Naive thymus-derived CD4-positive, alpha-beta T cell (primary cell): ENCODE measurements at regions of chr14 and their contacts with region 1.

Region 1: DNA sequence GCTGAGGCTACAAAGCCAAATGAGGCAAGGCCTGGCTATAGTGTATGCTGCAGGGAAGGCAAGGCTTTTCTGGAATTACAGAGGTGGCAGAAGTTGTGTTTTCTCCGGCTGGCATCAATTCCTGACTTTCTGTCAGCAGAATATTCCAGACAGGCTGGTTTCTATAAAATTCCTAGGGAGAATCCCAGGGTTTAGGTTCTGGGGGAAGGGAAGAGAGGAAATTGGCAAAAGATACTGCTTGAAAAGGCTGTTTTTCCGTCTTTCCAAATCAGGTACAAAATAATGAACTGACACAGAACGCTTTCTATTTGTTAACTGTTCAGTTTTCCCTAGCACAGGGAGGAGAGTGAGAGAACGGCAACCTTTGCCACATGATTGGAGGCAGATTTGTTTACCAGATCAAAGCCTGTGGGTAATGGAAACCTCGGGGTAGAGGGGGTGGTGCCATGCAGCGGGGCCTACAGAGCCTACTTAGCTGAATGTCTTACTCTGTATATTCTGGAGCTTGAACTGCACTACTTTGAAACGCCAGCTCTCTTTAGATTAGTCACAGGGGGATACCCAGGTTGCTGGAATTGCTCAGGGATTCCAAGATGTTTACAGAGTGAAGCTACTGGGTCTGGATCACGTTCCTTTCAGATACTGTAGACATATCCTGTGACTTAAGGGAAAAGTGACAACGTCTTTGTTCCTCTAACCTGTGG is 65.8 kb upstream of the DACT1 start:
- DNase-seq: peak in 8 of 9 donors; percentile 41 to 80 (median 69)
- ATAC-seq: peak; percentile 87
- H3K4me3 ChIP-seq: no peak overlapping the region
- H3K4me3 Mint-ChIP-seq: peak overlapping the region; percentile 35 to 83 (median 70)
- H3K27ac ChIP-seq: peak overlapping the region; percentile 40
- H3K27ac Mint-ChIP-seq: peak overlapping the region; percentile 74 to 96 (median 93)
- H3K4me1 ChIP-seq: peaks cover 0 to 33% of the 10 kb centered on the region in 2 donors
- H3K4me1 Mint-ChIP-seq: peaks cover 14 to 67% (median 51%) of the 10 kb centered on the region in 7 donors
- H3K27me3 ChIP-seq: no peaks in the 10 kb centered on the region
- H3K27me3 Mint-ChIP-seq: no peaks in the 10 kb centered on the region

Region 2: GRCh38 chr14:58549105-58549755 is 22.7 kb before region 1 on chr14:
- CTCF ChIA-PET with region 1: no interaction called
- POLR2A ChIA-PET with region 1: interaction called, 8 read pairs
- intact Hi-C with region 1: loop called in 1 of 2 experiments (anchors 2 kb)
- DNase-seq: no peak
- ATAC-seq: no peak
- H3K4me3 ChIP-seq: no peak overlapping the region
- H3K4me3 Mint-ChIP-seq: no peak overlapping the region
- H3K27ac ChIP-seq: no peak overlapping the region
- H3K27ac Mint-ChIP-seq: no peak overlapping the region
- H3K4me1 ChIP-seq: no peaks in the 10 kb centered on the region
- H3K4me1 Mint-ChIP-seq: peaks cover 0 to 3% (median 0%) of the 10 kb centered on the region in 7 donors
- H3K27me3 ChIP-seq: no peaks in the 10 kb centered on the region
- H3K27me3 Mint-ChIP-seq: no peaks in the 10 kb centered on the region

Region 3: DNA sequence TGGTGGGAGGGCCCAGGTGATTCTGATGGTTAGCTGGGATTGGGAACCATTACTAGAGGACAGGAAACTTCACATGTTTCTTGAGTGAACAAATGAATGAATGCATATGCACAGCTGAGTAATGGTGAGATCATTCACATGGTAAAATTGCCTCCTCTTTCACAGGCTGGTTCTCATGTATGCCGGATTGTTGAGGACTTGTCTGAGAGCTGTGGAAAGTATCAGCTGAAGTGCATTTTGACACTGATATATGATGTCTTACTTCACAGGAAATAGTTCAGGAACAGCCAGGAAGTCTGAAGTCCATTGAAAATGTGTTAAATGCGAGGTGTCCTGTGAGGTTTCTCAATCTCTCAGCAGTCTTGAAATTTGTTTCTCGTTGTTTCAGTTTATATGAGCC is 11.7 kb before region 1 on chr14:
- CTCF ChIA-PET with region 1: interaction called, 4 read pairs
- POLR2A ChIA-PET with region 1: interaction called, 13 read pairs
- intact Hi-C with region 1: no loop called
- DNase-seq: no peak
- ATAC-seq: no peak
- H3K4me3 ChIP-seq: no peak overlapping the region
- H3K4me3 Mint-ChIP-seq: no peak overlapping the region
- H3K27ac ChIP-seq: no peak overlapping the region
- H3K27ac Mint-ChIP-seq: no peak overlapping the region
- H3K4me1 ChIP-seq: peaks cover 0 to 6% of the 10 kb centered on the region in 2 donors
- H3K4me1 Mint-ChIP-seq: peaks cover 0 to 10% (median 4%) of the 10 kb centered on the region in 7 donors
- H3K27me3 ChIP-seq: no peaks in the 10 kb centered on the region
- H3K27me3 Mint-ChIP-seq: no peaks in the 10 kb centered on the region

Region 4: DNA sequence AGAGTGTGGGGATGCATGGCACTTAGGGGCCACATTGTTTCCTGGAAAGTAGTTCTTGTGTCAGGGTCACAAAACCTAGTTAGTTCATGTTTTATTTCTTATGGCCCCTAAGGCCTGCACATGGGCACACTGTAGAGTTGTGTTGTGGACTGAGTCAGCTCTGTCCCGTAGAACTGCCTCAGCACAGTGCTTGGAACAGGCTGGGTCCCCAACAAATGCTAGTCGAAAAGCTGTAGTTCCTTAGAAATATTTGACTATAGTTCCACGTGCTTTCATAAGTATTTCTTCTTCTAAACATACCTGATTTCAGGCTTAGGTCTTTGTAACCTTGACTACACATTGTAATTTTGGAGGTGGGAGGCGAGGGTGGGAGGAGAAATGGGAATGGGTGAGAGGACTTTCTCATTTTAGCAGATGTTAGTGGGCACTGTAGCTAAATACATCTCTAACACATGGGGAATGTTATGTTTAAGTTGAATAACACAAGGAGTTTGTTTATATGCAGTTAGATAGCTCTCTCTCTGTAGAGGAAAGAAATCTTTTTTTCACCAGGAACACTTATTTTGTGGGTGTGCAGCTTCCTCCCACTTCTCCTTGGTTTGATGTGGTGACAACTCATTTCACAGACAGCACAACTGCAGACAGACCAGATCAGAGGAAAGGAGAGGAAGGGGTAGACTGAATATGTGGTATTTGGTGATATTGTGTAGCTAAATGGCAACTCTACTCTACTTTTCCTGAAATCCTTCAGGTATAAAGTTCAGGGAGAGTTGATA is 26.3 kb after region 1 on chr14:
- CTCF ChIA-PET with region 1: interaction called, 7 read pairs
- POLR2A ChIA-PET with region 1: interaction called, 4 read pairs
- intact Hi-C with region 1: loop called (anchors 1 kb)
- DNase-seq: peak in 7 of 9 donors; percentile 54 to 81 (median 74)
- ATAC-seq: peak; percentile 92
- H3K4me3 ChIP-seq: peak overlapping the region; percentile 3
- H3K4me3 Mint-ChIP-seq: peak overlapping the region; percentile 49 to 78 (median 72)
- H3K27ac ChIP-seq: peak overlapping the region; percentile 7
- H3K27ac Mint-ChIP-seq: peak overlapping the region; percentile 42 to 92 (median 72)
- H3K4me1 ChIP-seq: peaks cover 0 to 46% of the 10 kb centered on the region in 2 donors
- H3K4me1 Mint-ChIP-seq: peaks cover 16 to 59% (median 47%) of the 10 kb centered on the region in 7 donors
- H3K27me3 ChIP-seq: no peaks in the 10 kb centered on the region
- H3K27me3 Mint-ChIP-seq: peaks cover 0 to 5% (median 0%) of the 10 kb centered on the region in 5 donors

Region 5: DNA sequence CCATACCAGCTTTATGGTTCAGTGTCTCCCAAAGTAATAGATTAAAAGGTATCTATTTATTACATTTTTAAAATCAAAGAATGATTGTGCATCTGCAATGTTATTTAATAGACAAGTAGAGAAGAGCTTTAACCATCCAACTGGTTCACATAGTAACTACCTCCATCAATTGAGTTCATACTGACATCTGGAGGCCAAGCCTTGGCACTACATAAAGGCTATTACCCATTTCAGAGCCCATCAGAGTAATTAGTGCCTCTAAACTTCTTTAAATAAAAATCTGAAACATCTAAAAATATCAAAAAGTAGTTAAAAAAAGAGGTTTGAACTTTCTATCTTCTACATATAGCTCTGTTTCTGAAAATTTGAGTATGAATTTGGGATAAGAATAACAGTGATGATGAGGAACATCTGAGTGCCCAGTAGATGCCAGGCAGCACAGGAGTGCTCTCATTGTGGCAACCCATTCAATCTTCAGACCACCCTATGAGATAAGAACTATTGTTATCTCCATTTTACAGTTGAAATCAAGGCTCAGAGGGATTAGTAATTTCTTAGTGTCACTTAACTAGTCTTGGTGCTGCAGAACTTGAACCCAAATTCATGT is 483.6 kb after region 1 on chr14:
- CTCF ChIA-PET with region 1: no interaction called
- POLR2A ChIA-PET with region 1: no interaction called
- intact Hi-C with region 1: loop called in 1 of 2 experiments (anchors 2 kb)
- DNase-seq: peak in 7 of 9 donors; percentile 10 to 60 (median 36)
- ATAC-seq: peak; percentile 83
- H3K4me3 ChIP-seq: no peak overlapping the region
- H3K4me3 Mint-ChIP-seq: no peak overlapping the region
- H3K27ac ChIP-seq: no peak overlapping the region
- H3K27ac Mint-ChIP-seq: no peak overlapping the region
- H3K4me1 ChIP-seq: no peaks in the 10 kb centered on the region
- H3K4me1 Mint-ChIP-seq: no peaks in the 10 kb centered on the region
- H3K27me3 ChIP-seq: no peaks in the 10 kb centered on the region
- H3K27me3 Mint-ChIP-seq: peaks cover 0 to 11% (median 5%) of the 10 kb centered on the region in 5 donors